ENCODE measurements at regions of chr13 and their contacts with region 1.

Region 1: DNA sequence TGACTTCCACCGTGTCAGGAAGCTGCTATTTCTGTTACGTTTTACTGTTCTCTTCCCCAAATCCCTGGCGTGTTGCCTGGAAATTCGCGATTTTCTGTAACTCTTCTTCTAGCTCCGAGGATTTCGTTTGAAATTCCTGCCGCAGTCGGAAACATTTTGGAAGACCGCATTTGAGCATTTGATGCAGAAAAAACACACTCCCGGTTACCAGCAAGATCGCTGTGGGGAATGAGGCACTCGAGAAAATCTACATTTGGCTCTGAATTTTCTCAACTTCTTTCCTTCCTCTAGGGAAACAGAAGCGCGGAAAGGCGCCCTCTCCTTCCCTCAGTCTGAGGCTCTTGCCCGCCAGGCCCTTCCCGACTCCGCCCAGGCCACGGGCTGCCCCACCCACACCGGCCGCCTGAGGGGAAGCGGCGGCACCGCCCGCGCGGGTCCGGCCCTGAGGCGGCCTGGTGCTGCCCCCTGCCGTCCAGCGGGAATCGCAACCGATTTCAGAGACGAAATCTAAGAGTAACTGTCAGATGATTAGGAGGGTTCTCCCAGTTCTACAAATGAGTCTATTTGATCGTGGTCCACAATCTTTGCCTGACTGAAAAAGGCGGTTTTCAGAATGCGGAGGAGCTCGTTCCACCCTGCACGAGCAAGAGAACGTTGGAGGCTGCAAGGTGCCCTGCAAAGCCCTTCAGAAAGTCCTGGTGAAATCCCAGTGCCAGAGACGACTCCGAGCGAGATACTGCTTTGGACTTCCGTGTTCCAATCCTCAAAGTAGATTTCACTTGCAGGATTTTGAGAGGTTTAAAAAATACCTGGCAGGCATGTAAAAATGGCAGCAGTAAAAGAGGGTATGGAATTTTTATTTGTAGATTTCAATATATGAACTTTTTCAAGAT is 18.4 kb upstream of the TUBGCP3 start:
- DNase-seq: peak; percentile 95 to 96
- ATAC-seq: peak; percentile 100
- H3K4me3 ChIP-seq: peak overlapping the region; percentile 71
- H3K27ac ChIP-seq: peak overlapping the region; percentile 52
- H3K4me1 ChIP-seq: peaks cover 2% of the 10 kb centered on the region
- H3K27me3 ChIP-seq: peaks cover 0 to 10% (median 0%) of the 10 kb centered on the region in 3 donors
- CTCF ChIP-seq: peak; percentile 93

Region 2: GRCh38 chr13:111474136-111475002 is 1132.0 kb before region 1 on chr13:
- intact Hi-C with region 1: loop called (anchors 5 kb)
- DNase-seq: no peak
- ATAC-seq: peak; percentile 43 to 63 (median 54)
- H3K4me3 ChIP-seq: no peak overlapping the region
- H3K27ac ChIP-seq: no peak overlapping the region
- H3K4me1 ChIP-seq: no peaks in the 10 kb centered on the region
- H3K27me3 ChIP-seq: peaks cover 0 to 18% (median 2%) of the 10 kb centered on the region in 3 donors
- CTCF ChIP-seq: peak; percentile 55

Region 3: DNA sequence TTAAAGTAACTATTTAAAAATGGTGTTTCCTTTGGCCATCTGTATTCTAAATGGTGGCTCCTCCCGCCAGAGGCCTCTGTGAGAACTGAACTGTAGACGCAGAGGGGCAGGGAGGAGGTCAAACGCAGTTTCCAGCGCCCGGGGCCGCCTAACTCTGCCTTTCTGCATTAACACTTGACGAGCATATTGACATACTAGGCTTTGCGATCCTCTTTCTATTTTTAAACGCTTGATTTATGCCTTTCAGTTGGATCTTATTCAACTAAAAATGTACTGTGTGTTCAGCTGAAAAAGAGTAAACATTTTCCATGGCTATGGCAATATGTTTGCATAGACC is 155.5 kb before region 1 on chr13:
- intact Hi-C with region 1: loop called in 1 of 2 experiments (anchors 5 kb)
- DNase-seq: no peak
- ATAC-seq: no peak
- H3K4me3 ChIP-seq: no peak overlapping the region
- H3K27ac ChIP-seq: no peak overlapping the region
- H3K4me1 ChIP-seq: no peaks in the 10 kb centered on the region
- H3K27me3 ChIP-seq: peaks cover 0 to 7% (median 5%) of the 10 kb centered on the region in 3 donors
- CTCF ChIP-seq: no peak

Region 4: GRCh38 chr13:112711528-112712265 is 105.3 kb after region 1 on chr13:
- intact Hi-C with region 1: no loop called
- DNase-seq: peak; percentile 83 to 87
- ATAC-seq: peak; percentile 92 to 95 (median 92)
- H3K4me3 ChIP-seq: peak overlapping the region; percentile 48
- H3K27ac ChIP-seq: peak overlapping the region; percentile 90
- H3K4me1 ChIP-seq: peaks cover 17% of the 10 kb centered on the region
- H3K27me3 ChIP-seq: no peaks in the 10 kb centered on the region
- CTCF ChIP-seq: peak; percentile 18

Measured in psoas muscle (tissue), 8 donors.